CD8-positive, alpha-beta T cell (primary cell): ENCODE measurements at regions of chr2 and their contacts with region 1.

Region 1: GRCh38 chr2:113889471-113890252 is at the start of gene ACTR3:
- DNase-seq: peak; percentile 96 to 99 (median 98)
- ATAC-seq: peak; percentile 86
- H3K4me3 ChIP-seq: peak within 1 kb of the TSS; percentile 92 to 97
- H3K4me3 Mint-ChIP-seq: peak within 1 kb of the TSS; percentile 100
- H3K27ac ChIP-seq: peak within 1 kb of the TSS; percentile 69 to 98
- H3K27ac Mint-ChIP-seq: peak within 1 kb of the TSS; percentile 99
- H3K4me1 ChIP-seq: peaks cover 69% of the 10 kb centered on the region
- H3K4me1 Mint-ChIP-seq: peaks cover 81% of the 10 kb centered on the region
- H3K27me3 ChIP-seq: no peaks in the 10 kb centered on the region
- H3K27me3 Mint-ChIP-seq: no peaks in the 10 kb centered on the region
- CTCF ChIP-seq: no peak
- total RNA-seq, gene ACTR3: 121 to 122 TPM

Region 2: DNA sequence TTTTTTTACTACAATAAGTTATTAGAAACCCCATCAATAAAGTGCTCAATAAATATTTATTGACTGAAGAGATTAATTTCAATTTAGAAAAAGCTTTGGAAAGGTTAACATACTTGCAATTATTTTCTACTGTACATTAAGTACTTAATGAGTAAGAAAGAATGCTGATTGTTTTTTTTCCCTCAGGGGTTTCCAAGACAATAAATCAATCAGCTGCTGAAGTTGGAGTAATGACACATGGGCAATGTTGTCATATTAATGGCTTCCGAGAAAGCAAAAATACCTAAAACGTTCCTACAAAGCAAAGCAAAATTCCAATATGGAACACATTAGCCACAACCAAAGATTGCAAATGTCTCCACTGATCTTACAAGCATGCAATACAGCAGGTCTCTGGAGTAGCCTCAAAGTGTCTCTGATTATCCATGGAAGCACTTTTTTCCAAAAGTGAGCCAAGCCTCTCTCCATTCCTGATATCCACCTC is 1547.6 kb before region 1 on chr2:
- CTCF ChIA-PET with region 1: no interaction called
- POLR2A ChIA-PET with region 1: no interaction called
- intact Hi-C with region 1: no loop called
- DNase-seq: no peak
- ATAC-seq: no peak
- H3K4me3 ChIP-seq: no peak overlapping the region
- H3K4me3 Mint-ChIP-seq: no peak overlapping the region
- H3K27ac ChIP-seq: no peak overlapping the region
- H3K27ac Mint-ChIP-seq: no peak overlapping the region
- H3K4me1 ChIP-seq: no peaks in the 10 kb centered on the region
- H3K4me1 Mint-ChIP-seq: no peaks in the 10 kb centered on the region
- H3K27me3 ChIP-seq: no peaks in the 10 kb centered on the region
- H3K27me3 Mint-ChIP-seq: no peaks in the 10 kb centered on the region
- CTCF ChIP-seq: no peak

Region 3: GRCh38 chr2:112645310-112646101 is 1244.2 kb before region 1 on chr2 and contains the start of gene SLC20A1:
- CTCF ChIA-PET with region 1: no interaction called
- POLR2A ChIA-PET with region 1: no interaction called
- intact Hi-C with region 1: loop called in 1 of 2 experiments (anchors 10 kb)
- DNase-seq: peak; percentile 96 to 100 (median 98)
- ATAC-seq: peak; percentile 91
- H3K4me3 ChIP-seq: peak within 1 kb of the TSS; percentile 84 to 90
- H3K4me3 Mint-ChIP-seq: peak within 1 kb of the TSS; percentile 85
- H3K27ac ChIP-seq: peak within 1 kb of the TSS; percentile 91
- H3K27ac Mint-ChIP-seq: peak within 1 kb of the TSS; percentile 89
- H3K4me1 ChIP-seq: peaks cover 50% of the 10 kb centered on the region
- H3K4me1 Mint-ChIP-seq: peaks cover 56% of the 10 kb centered on the region
- H3K27me3 ChIP-seq: no peaks in the 10 kb centered on the region
- H3K27me3 Mint-ChIP-seq: no peaks in the 10 kb centered on the region
- CTCF ChIP-seq: peak; percentile 55
- total RNA-seq, gene SLC20A1: 144 to 145 TPM

Region 4: DNA sequence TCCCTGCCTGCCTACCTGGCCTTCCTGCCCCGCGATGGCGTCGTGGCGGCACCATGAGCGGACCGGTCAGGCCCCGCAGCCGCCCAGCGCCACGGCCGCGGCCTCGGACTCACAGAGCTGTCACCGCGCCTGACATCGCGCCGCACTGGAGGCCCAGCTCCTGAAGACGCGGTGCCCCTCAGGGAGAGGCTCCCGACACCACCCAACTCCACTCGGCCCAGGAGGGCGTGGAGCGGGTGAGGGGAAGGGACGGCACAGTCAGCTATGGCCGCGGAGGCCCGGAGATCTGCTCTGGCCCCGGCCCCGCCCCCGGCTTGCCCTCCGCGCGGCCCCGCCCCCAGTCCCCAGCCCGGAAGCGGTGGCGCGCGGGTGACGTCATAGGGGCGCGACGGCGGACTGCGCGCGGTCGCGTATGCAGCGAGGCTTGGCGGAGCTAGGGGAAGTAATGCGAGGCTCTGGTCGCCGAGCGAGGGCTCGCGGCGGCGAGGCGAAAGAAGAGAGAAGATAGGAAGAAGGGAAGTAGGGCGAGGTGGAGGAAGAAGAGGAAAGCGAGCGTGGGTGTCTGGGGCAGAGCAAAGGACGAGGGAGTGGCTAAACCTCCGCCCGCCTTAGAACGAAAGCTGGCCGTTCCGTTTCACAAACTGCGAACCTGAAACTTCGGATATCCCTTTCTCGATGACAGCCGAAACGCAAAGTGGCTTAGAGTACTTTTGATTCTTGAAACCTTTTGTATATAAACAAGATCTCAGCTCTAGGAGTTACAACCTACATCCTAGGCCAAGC is 133.1 kb before region 1 on chr2 and contains the start of gene SLC35F5:
- CTCF ChIA-PET with region 1: no interaction called
- POLR2A ChIA-PET with region 1: interaction called, 20 read pairs
- intact Hi-C with region 1: loop called (anchors 1 kb)
- DNase-seq: peak; percentile 86 to 98 (median 94)
- ATAC-seq: peak; percentile 90
- H3K4me3 ChIP-seq: peak within 1 kb of the TSS; percentile 82 to 88
- H3K4me3 Mint-ChIP-seq: peak within 1 kb of the TSS; percentile 98
- H3K27ac ChIP-seq: peak within 1 kb of the TSS; percentile 97 to 99
- H3K27ac Mint-ChIP-seq: peak within 1 kb of the TSS; percentile 100
- H3K4me1 ChIP-seq: peaks cover 12% of the 10 kb centered on the region
- H3K4me1 Mint-ChIP-seq: peaks cover 30% of the 10 kb centered on the region
- H3K27me3 ChIP-seq: no peaks in the 10 kb centered on the region
- H3K27me3 Mint-ChIP-seq: no peaks in the 10 kb centered on the region
- CTCF ChIP-seq: no peak
- total RNA-seq, gene SLC35F5: 19.3 to 20.7 TPM

Region 5: DNA sequence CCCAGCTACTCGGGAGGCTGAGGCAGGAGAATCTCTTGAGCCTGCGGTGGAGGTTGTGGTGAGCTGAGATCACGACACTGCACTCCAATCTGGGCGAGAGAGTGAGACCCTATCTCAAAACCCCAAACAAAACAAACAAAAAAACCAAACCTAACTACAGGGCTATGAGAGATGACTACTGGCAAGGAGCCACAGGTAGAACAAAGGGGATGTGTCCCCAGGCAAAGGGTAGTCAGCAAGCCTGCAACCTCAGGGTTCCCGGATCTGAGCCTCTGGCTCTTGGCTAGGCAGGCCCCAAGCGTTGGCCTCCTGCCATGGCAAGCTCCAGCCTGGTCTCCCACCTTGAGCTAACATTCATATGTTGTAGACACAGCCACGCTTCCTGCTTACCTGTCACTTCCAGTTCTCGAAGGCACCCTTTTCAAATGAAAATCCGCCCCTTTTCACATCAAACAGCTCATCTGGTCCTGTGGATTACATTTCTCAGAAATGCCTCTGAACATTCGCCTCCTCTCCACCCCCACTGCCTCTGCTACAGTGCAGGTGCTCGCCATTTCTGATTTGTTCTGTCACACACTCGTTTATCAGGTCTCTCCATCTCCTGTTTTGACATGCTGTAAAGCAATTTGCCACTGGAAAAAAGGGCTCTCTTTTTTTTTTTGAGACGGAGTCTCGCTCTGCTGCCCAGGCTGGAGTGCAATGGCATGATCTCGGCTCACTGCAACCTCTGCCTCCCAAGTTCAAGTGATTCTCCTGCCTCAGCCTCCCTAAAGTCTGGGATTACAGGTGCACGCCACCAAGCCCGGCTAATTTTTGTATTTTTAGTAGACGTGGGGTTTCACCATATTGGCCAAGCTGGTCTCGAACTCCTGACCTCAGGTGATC is 12.9 kb before region 1 on chr2:
- CTCF ChIA-PET with region 1: no interaction called
- POLR2A ChIA-PET with region 1: interaction called, 10 read pairs
- intact Hi-C with region 1: loop called in 1 of 2 experiments (anchors 1 kb)
- DNase-seq: peak; percentile 32 to 81 (median 71)
- ATAC-seq: peak; percentile 89
- H3K4me3 ChIP-seq: no peak overlapping the region
- H3K4me3 Mint-ChIP-seq: peak overlapping the region; percentile 29
- H3K27ac ChIP-seq: peak overlapping the region; percentile 6 to 49
- H3K27ac Mint-ChIP-seq: peak overlapping the region; percentile 86
- H3K4me1 ChIP-seq: peaks cover 26% of the 10 kb centered on the region
- H3K4me1 Mint-ChIP-seq: peaks cover 42% of the 10 kb centered on the region
- H3K27me3 ChIP-seq: no peaks in the 10 kb centered on the region
- H3K27me3 Mint-ChIP-seq: no peaks in the 10 kb centered on the region
- CTCF ChIP-seq: no peak

Region 6: DNA sequence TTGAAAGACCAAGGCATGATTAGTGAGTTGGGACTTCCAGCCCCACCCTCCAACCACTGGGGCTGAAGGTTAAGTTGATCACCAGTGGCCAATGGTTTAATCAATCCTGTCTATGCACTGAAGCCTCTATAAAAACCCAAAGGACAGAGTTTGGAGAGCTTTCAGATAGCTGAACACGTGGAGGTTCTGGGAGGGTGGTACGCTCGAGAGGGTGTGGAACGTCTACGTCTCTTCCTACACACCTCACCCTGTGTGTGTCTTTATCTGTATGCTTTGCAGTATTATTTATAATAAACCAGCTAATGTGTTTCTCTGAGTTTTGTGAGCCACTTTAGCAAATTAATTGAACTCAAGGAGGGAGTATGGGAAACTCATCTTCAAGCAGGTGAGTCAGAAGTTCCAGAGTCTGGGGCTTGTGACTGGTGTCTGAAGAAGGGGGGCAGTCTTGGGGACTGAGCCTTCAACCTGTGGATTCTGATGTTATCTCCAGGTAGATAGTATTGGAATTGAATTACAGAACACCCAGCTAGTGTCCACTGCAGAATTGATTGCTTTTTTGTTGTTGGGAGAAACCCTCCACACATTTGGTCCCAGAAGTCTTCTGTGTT is 20.6 kb after region 1 on chr2:
- CTCF ChIA-PET with region 1: interaction called, 3 read pairs
- POLR2A ChIA-PET with region 1: interaction called, 4 read pairs
- intact Hi-C with region 1: loop called in 1 of 2 experiments (anchors 1 kb)
- DNase-seq: peak in 7 of 9 experiments; percentile 25 to 69 (median 55)
- ATAC-seq: peak; percentile 84
- H3K4me3 ChIP-seq: no peak overlapping the region
- H3K4me3 Mint-ChIP-seq: peak overlapping the region; percentile 60
- H3K27ac ChIP-seq: peak overlapping the region in 1 of 2 experiments; percentile 26
- H3K27ac Mint-ChIP-seq: peak overlapping the region; percentile 62
- H3K4me1 ChIP-seq: peaks cover 46% of the 10 kb centered on the region
- H3K4me1 Mint-ChIP-seq: peaks cover 79% of the 10 kb centered on the region
- H3K27me3 ChIP-seq: no peaks in the 10 kb centered on the region
- H3K27me3 Mint-ChIP-seq: no peaks in the 10 kb centered on the region
- CTCF ChIP-seq: no peak

Region 7: GRCh38 chr2:113922784-113923183 is 33.1 kb after region 1 on chr2:
- CTCF ChIA-PET with region 1: no interaction called
- POLR2A ChIA-PET with region 1: no interaction called
- intact Hi-C with region 1: loop called in 1 of 2 experiments (anchors 5 kb)
- DNase-seq: no peak
- ATAC-seq: no peak
- H3K4me3 ChIP-seq: no peak overlapping the region
- H3K4me3 Mint-ChIP-seq: no peak overlapping the region
- H3K27ac ChIP-seq: no peak overlapping the region
- H3K27ac Mint-ChIP-seq: no peak overlapping the region
- H3K4me1 ChIP-seq: peaks cover 32% of the 10 kb centered on the region
- H3K4me1 Mint-ChIP-seq: peaks cover 36% of the 10 kb centered on the region
- H3K27me3 ChIP-seq: no peaks in the 10 kb centered on the region
- H3K27me3 Mint-ChIP-seq: no peaks in the 10 kb centered on the region
- CTCF ChIP-seq: no peak

Region 8: GRCh38 chr2:113940891-113941290 is 51.2 kb after region 1 on chr2:
- CTCF ChIA-PET with region 1: no interaction called
- POLR2A ChIA-PET with region 1: no interaction called
- intact Hi-C with region 1: loop called in 1 of 2 experiments (anchors 5 kb)
- DNase-seq: no peak
- ATAC-seq: no peak
- H3K4me3 ChIP-seq: no peak overlapping the region
- H3K4me3 Mint-ChIP-seq: no peak overlapping the region
- H3K27ac ChIP-seq: no peak overlapping the region
- H3K27ac Mint-ChIP-seq: no peak overlapping the region
- H3K4me1 ChIP-seq: no peaks in the 10 kb centered on the region
- H3K4me1 Mint-ChIP-seq: peaks cover 9% of the 10 kb centered on the region
- H3K27me3 ChIP-seq: no peaks in the 10 kb centered on the region
- H3K27me3 Mint-ChIP-seq: no peaks in the 10 kb centered on the region
- CTCF ChIP-seq: no peak